ENCODE measurements at regions of chr2 and their contacts with region 1.

Region 1: GRCh38 chr2:204691911-204692510 is 146.7 kb downstream of the PARD3B start:
- ATAC-seq: peak; percentile 67 to 96 (median 81)
- H3K4me3 ChIP-seq: no peak overlapping the region
- H3K27ac ChIP-seq: no peak overlapping the region
- H3K4me1 ChIP-seq: peaks cover 0 to 2% of the 10 kb centered on the region in 2 donors

Region 2: DNA sequence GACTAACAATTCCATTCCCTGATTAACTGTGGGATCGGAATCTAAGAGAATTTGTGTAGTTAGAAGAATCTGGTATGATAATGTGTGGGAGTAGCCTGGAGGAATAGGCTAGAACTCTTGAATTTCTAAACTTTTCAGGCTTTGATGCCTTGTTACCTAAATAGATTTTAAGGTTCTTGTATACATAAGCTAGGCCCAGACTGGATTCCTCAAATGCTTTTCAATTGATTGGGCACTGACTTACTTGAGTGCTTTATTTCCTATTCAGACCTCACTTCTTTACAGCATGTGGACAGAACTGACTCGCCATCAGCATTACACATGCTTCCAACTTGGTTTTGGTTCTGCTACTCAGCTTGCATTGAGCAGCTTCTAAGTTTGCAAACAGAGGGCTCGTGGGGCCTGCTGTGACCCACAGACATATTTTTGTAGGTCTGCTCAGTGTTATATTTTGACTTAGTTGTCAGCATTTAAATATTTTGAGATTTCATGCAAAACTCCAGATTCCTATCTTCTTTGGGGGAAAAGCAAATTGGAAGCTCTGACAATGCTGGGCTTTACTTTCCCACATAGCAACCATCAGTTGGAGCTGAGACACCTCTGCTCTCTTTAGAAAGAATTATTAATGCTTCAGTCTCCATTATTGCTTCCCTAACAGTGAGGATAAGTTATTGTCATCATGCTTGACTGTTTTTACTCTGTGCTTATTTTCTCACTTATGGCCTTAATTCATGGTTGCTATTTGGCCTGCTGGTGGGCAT is 141.1 kb before region 1 on chr2:
- in situ Hi-C with region 1: loop called in 1 of 9 experiments (anchors 25 kb)
- ATAC-seq: peak; percentile 50 to 83 (median 73)
- H3K4me3 ChIP-seq: no peak overlapping the region
- H3K27ac ChIP-seq: peak overlapping the region in 1 of 2 donors; percentile 29
- H3K4me1 ChIP-seq: peaks cover 21 to 24% of the 10 kb centered on the region in 2 donors

Region 3: GRCh38 chr2:205270689-205271088 is 578.7 kb after region 1 on chr2:
- in situ Hi-C with region 1: no loop called
- ATAC-seq: no peak
- H3K4me3 ChIP-seq: no peak overlapping the region
- H3K27ac ChIP-seq: no peak overlapping the region
- H3K4me1 ChIP-seq: peaks cover 0 to 11% of the 10 kb centered on the region in 2 donors